Ovary (tissue), 10 donors: ENCODE measurements at regions of chr6 and their contacts with region 1.

Region 1: DNA sequence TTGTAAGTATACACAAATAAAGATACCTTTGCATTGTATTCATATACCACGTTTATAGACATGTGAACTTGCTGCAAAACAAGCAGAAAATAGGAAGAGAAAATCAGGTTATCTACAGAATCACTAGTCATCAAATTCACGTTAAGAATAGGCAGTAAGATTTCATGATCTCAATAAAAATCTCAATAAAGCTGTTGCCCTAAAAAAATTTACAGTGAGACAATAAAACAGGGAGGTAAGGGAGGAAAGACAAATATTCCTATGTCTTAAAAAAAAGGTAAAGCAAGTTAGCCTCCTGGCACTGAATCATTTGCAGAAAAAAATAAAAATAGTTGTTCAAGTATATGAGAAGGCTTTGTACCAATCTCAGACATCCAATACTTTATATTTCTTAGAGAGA is 44.1 kb downstream of the GPX5 start:
- DNase-seq: no peak
- H3K4me3 ChIP-seq: no peak overlapping the region
- H3K27ac ChIP-seq: no peak overlapping the region
- H3K4me1 ChIP-seq: no peaks in the 10 kb centered on the region
- H3K27me3 ChIP-seq: no peaks in the 10 kb centered on the region
- CTCF ChIP-seq: no peak
- EP300 ChIP-seq: no peak
- POLR2A ChIP-seq: no peak

Region 2: DNA sequence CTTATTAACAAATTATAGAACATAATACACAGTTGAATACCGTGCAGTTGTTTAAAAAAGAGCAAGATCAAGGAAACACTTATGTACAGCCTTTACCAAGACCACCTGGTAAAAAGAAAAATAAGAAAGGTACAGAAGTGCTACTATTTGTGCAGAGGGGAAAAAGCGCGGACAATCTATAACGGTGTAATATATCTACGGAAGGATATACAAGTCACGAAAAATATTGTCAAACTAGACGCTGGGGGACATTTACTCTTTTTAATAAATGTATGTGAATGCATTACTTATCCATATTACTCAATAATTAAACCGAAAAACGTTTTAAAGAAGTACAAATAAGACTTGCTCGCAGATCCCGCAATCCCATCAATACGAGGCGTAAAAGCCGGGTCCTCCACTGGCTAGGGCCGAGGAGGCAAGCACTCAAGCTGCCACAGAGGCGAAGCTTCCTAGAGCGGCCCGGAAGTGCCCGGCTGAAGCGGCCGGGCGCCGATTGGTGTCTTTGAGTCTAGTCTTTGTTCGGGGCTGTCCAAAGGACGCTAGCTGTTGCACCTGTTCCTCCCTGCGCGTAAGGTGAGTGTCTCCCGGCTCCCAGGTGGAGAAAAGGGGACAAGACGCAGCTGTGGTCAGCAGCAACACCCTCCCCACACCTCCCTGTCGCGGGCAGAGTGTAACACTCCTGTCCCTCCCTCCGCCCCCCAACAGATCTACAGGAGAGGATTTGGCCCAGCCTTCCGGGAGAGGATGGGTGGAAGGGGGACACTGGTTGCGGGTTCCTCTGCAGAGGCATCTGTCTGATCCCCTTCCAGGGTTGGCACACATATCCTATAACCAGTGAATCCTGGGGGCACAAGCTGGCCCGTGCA is 445.4 kb before region 1 on chr6 and contains the start of gene ZSCAN16:
- intact Hi-C with region 1: no loop called
- DNase-seq: peak; percentile 71 to 86 (median 75)
- H3K4me3 ChIP-seq: peak within 1 kb of the TSS; percentile 50
- H3K27ac ChIP-seq: no peak within 1 kb of the TSS
- H3K4me1 ChIP-seq: peaks cover 4% of the 10 kb centered on the region
- H3K27me3 ChIP-seq: no peaks in the 10 kb centered on the region
- CTCF ChIP-seq: no peak
- EP300 ChIP-seq: no peak
- POLR2A ChIP-seq: no peak
- total RNA-seq, gene ZSCAN16: 2.6 to 4.4 (median 3.1) TPM

Region 3: DNA sequence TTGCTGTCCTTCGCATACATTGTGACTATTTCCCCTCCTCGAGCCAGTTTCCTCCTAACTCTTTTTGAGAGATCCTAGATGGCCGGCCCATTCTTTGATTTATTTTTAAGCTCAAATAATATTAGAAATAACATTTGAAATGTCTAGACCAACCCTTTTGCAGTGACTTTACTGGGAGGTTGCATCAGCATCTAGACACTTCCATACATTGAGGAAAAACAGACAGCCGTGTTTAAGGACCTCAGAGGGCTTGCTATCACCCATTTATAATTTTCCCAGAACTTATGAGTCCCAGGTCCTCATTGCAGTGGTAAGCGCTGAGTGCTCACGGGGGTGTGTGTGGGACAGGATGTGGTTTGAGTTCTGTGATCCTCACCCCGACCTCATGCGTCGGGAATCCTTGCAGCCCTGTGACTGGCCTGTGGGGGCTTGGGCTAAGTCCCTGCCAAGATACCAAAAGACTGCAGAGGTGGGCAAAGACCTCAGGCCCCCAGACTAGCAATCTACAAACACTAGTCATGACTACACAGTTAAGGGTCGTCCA is 44.2 kb before region 1 on chr6 and contains the start of gene GPX5:
- intact Hi-C with region 1: no loop called
- DNase-seq: no peak
- H3K4me3 ChIP-seq: no peak within 1 kb of the TSS
- H3K27ac ChIP-seq: no peak within 1 kb of the TSS
- H3K4me1 ChIP-seq: no peaks in the 10 kb centered on the region
- H3K27me3 ChIP-seq: no peaks in the 10 kb centered on the region
- CTCF ChIP-seq: no peak
- EP300 ChIP-seq: no peak
- POLR2A ChIP-seq: no peak
- total RNA-seq, gene GPX5: not detected

Region 4: DNA sequence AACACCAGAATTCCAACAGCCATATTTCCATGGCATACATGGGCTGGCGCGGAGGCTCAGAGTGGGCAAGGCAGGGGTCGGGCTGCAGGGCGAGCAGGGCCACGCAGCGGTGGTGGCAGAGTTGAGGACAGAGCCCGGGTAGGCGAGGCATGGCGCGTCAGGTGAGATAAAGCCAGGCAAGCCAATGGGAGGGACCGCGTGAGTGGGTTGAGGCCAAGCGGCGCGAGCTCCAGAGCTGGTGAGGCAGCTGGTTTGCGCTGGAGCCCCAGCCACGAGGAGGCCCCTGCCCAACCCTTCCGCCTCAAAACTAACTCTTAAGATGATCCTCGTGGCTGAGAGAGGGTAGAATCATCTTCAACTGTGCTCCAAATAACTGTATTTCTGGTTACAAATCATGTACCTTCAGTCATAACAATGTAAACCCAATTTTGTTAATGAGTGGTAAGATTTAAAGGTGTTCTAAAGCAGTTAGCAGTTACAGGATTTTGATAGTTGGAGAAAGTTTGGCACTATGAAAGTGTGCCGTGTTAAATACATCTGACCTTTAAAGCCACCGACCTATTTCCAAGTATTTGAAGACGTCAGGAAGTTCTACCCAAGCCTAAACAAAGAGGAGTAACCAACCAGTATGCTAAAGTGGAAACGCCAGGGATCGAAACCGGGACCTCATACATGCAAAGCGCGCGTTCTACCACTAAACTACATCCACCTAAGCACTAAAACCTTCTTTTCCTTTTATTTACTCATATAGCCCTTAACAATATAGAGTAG is 63.9 kb after region 1 on chr6:
- intact Hi-C with region 1: no loop called
- DNase-seq: no peak
- H3K4me3 ChIP-seq: no peak overlapping the region
- H3K27ac ChIP-seq: no peak overlapping the region
- H3K4me1 ChIP-seq: no peaks in the 10 kb centered on the region
- H3K27me3 ChIP-seq: no peaks in the 10 kb centered on the region
- CTCF ChIP-seq: no peak
- EP300 ChIP-seq: no peak
- POLR2A ChIP-seq: no peak

Region 5: GRCh38 chr6:30163090-30163917 is 1593.6 kb after region 1 on chr6 and contains the start of gene TRIM15:
- intact Hi-C with region 1: loop called in 1 of 4 experiments (anchors 5 kb)
- DNase-seq: no peak
- H3K4me3 ChIP-seq: no peak within 1 kb of the TSS
- H3K27ac ChIP-seq: no peak within 1 kb of the TSS
- H3K4me1 ChIP-seq: no peaks in the 10 kb centered on the region
- H3K27me3 ChIP-seq: no peaks in the 10 kb centered on the region
- CTCF ChIP-seq: no peak
- EP300 ChIP-seq: no peak
- POLR2A ChIP-seq: no peak
- total RNA-seq, gene TRIM15: 0.72 TPM in 1 of 7 donors, not detected in the others